ENCODE measurements at regions of chr1 and their contacts with region 1.

Region 1: GRCh38 chr1:206895830-206896242 is 1.4 kb upstream of the IL24 start:
- DNase-seq: no peak
- H3K4me3 ChIP-seq: no peak overlapping the region
- H3K27ac ChIP-seq: no peak overlapping the region
- H3K4me1 ChIP-seq: peaks cover 0 to 1% (median 0%) of the 10 kb centered on the region in 4 experiments; a peak in 2 of 7 replicates
- H3K27me3 ChIP-seq: no peaks in the 10 kb centered on the region
- CTCF ChIP-seq: no peak
- EP300 ChIP-seq: no peak
- POLR2A ChIP-seq: no peak
- RAD21 ChIP-seq: no peak

Region 2: GRCh38 chr1:206878456-206878855 is 17.4 kb before region 1 on chr1:
- CTCF ChIA-PET with region 1: interaction called, 16 read pairs
- POLR2A ChIA-PET with region 1: no interaction called
- DNase-seq: no peak
- H3K4me3 ChIP-seq: no peak overlapping the region
- H3K27ac ChIP-seq: no peak overlapping the region
- H3K4me1 ChIP-seq: no peaks in the 10 kb centered on the region
- H3K27me3 ChIP-seq: no peaks in the 10 kb centered on the region
- CTCF ChIP-seq: peak in 1 of 3 experiments; percentile 30; a peak in 1 of 4 replicates
- EP300 ChIP-seq: no peak
- POLR2A ChIP-seq: no peak
- RAD21 ChIP-seq: no peak

Region 3: GRCh38 chr1:206955476-206956451 is 59.9 kb after region 1 on chr1:
- CTCF ChIA-PET with region 1: no interaction called
- POLR2A ChIA-PET with region 1: no interaction called
- DNase-seq: no peak
- H3K4me3 ChIP-seq: no peak overlapping the region
- H3K27ac ChIP-seq: no peak overlapping the region
- H3K4me1 ChIP-seq: no peaks in the 10 kb centered on the region
- H3K27me3 ChIP-seq: peaks cover 0 to 3% (median 0%) of the 10 kb centered on the region in 4 experiments; a peak in 1 of 7 replicates
- CTCF ChIP-seq: no peak
- EP300 ChIP-seq: no peak
- POLR2A ChIP-seq: no peak
- RAD21 ChIP-seq: no peak

Region 4: DNA sequence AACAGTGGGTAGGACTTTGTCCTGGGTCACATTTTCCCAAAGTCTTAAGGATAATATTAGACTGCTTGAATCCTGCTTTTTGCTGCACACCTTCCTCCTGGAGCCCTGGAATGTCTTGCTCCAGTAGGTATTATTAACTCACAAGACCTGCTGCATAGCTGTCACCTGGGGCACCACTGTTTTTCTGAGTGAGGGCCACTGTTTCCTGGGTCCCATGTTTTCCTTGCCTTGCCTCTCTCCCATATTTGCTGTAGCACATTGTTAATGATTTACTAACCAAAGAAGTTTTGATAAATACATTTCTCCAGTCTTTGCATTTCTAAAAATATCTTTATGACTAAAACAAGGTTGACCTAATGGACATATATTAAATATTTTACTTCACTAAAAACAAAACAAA is 97.0 kb after region 1 on chr1:
- CTCF ChIA-PET with region 1: no interaction called
- POLR2A ChIA-PET with region 1: no interaction called
- DNase-seq: no peak
- H3K4me3 ChIP-seq: no peak overlapping the region
- H3K27ac ChIP-seq: no peak overlapping the region
- H3K4me1 ChIP-seq: no peaks in the 10 kb centered on the region
- H3K27me3 ChIP-seq: no peaks in the 10 kb centered on the region; a peak in 1 of 7 replicates
- CTCF ChIP-seq: no peak
- EP300 ChIP-seq: no peak
- POLR2A ChIP-seq: no peak
- RAD21 ChIP-seq: no peak

Measured in H1 (cell line).